Caco-2 (cell line): ENCODE measurements at regions of chr11 and their contacts with region 1.

Region 1: DNA sequence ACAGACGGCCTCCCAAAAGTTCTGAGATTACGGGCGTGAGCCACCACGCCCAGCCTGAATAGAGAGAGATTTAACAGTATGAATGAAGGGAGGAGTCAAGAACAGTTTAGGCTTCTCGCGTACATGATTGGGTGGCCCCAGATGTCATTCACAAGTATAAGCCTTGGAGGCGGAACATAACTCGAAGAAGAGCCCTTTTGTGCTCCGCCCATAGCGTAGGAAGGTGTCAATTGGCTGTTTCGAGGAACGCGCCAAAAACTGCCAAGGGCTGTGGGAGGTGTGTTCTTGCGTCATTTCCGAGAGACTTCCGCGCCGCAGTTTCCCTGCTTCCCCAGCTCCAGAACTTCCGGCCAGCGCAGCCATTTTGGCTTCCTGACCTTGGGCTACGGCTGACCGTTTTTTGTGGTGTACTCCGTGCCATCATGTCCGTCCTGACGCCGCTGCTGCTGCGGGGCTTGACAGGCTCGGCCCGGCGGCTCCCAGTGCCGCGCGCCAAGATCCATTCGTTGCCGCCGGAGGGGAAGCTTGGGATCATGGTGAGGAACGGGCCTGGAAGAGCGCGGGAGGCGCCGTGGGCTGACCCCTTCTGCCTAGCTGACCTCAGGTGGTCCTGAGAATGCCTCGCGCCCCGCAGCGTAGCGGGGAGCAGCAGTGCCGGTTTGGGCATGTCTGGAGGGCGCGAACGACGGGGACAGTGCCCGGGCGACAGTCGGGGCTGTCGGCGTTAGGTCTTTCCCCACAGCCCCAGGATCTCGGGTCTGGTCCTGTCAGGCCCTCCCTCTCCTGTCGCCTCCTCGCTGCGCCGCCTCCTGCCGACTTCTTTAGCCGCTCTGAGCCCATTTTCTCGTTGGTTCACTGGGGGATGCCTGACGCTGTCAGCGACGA is at the start of gene COX8A:
- DNase-seq: peak; percentile 98 to 99
- H3K4me3 ChIP-seq: peak within 1 kb of the TSS; percentile 74
- H3K4me3 Mint-ChIP-seq: peak within 1 kb of the TSS; percentile 99
- H3K27ac Mint-ChIP-seq: peak within 1 kb of the TSS; percentile 99
- H3K4me1 ChIP-seq: peaks cover 11% of the 10 kb centered on the region; the same call in 1 of the 2 replicates
- H3K4me1 Mint-ChIP-seq: peaks cover 17% of the 10 kb centered on the region
- H3K27me3 ChIP-seq: no peaks in the 10 kb centered on the region; the same call in 1 of the 2 replicates
- H3K27me3 Mint-ChIP-seq: no peaks in the 10 kb centered on the region
- CTCF ChIP-seq: peak in 1 of 2 experiments; percentile 22
- total RNA-seq, gene COX8A: 376 and 448 TPM in 2 replicates

Region 2: DNA sequence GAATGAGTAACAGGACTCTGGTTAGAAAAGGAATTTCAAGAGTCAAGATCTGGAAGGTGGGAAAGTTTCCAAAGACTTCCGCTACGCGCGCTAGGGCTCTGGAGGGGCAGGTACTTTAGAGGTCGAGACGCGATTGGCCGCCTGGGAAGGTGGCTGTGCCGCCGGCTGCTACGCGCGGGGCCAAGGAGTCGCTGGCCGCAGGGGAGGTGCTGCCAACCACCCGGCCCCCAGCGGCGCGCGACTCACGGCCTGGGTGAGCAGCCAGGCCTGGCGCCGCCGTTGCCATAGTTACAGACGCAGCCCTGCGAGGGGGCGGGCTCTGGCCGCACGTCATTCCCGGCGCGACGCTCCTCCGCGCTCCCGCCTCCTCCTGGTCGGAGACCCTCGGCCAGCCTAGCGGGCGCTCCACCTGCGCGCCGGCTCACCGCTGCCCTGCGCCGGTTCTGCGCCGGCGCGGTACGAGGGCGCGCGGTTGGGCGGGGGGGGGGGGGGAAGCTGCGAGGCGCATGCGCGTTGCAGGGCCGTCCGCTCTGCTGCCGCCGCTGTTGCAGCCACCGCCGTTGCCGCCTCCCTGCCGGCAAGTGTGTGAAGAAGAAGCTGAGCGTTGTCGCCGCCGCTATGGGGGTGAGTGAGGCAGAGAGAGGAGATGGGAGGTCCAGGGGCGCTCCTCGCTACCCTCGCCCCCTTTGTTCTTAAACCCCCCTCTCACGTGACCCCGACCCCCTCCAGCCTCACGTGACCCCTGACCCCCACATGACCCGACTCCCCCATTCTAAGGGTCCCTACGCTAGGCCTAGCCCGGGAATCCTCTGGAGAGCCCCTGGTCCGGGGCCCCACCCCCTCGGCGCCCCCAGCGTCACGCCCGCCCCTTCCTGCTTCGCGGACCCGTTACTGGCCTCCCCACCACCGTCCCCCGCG is 35.8 kb before region 1 on chr11 and contains the start of gene NAA40:
- CTCF ChIA-PET with region 1: no interaction called
- POLR2A ChIA-PET with region 1: interaction called, 3 read pairs
- intact Hi-C with region 1: loop called (anchors 2 kb)
- DNase-seq: peak; percentile 97 to 98
- H3K4me3 ChIP-seq: peak within 1 kb of the TSS; percentile 61
- H3K4me3 Mint-ChIP-seq: peak within 1 kb of the TSS; percentile 100
- H3K27ac Mint-ChIP-seq: peak within 1 kb of the TSS; percentile 98
- H3K4me1 ChIP-seq: no peaks in the 10 kb centered on the region
- H3K4me1 Mint-ChIP-seq: peaks cover 13% of the 10 kb centered on the region
- H3K27me3 ChIP-seq: no peaks in the 10 kb centered on the region
- H3K27me3 Mint-ChIP-seq: no peaks in the 10 kb centered on the region
- CTCF ChIP-seq: no peak
- total RNA-seq, gene NAA40: 42.7 and 43.7 TPM in 2 replicates

Region 3: GRCh38 chr11:63961608-63962412 is 12.7 kb before region 1 on chr11:
- CTCF ChIA-PET with region 1: interaction called, 12 read pairs
- POLR2A ChIA-PET with region 1: no interaction called
- intact Hi-C with region 1: no loop called
- DNase-seq: peak; percentile 64 to 65
- H3K4me3 ChIP-seq: no peak overlapping the region
- H3K4me3 Mint-ChIP-seq: no peak overlapping the region
- H3K27ac Mint-ChIP-seq: no peak overlapping the region
- H3K4me1 ChIP-seq: no peaks in the 10 kb centered on the region
- H3K4me1 Mint-ChIP-seq: no peaks in the 10 kb centered on the region
- H3K27me3 ChIP-seq: no peaks in the 10 kb centered on the region
- H3K27me3 Mint-ChIP-seq: no peaks in the 10 kb centered on the region
- CTCF ChIP-seq: no peak

Region 4: DNA sequence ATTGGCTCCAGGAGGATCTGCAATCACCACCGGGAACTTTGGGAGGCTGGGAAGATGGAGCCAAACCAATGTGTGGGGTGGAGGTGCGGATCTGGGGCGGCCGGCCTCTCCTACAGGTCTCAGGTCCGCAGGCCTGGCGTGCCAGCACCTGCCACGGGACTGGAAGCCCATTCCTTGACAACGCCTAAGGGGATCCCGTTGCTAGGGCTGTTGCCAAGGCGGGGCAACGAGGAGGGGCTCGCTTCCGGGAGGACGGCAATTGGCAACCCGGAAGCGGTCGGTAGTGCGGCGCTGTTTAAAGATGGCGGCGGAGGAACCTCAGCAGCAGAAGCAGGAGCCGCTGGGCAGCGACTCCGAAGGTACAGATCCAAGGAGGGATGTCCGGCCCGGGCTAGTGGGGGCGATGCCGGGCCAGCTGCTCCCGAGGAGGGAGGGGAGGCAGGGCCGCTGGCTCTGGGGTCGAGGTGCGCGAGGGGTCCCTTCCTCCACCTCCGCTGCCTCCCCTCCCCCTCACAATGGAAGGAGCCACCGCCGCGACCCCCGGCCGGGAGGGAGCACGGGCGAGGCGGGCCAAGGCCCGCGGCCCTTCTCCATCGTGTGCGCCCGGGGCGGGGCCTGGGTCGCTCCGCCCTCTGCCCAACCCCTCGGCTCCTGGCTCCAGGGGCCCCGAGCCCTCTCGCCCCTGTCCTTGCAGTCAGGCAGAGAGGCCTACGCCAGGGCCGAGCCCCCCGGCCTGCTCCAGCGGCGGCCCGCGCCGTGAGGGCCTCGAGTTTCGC is 11.8 kb after region 1 on chr11 and contains the start of gene OTUB1:
- CTCF ChIA-PET with region 1: no interaction called
- POLR2A ChIA-PET with region 1: no interaction called
- intact Hi-C with region 1: loop called (anchors 1 kb)
- DNase-seq: peak; percentile 98
- H3K4me3 ChIP-seq: peak within 1 kb of the TSS; percentile 96
- H3K4me3 Mint-ChIP-seq: peak within 1 kb of the TSS; percentile 98
- H3K27ac Mint-ChIP-seq: peak within 1 kb of the TSS; percentile 99
- H3K4me1 ChIP-seq: peaks cover 6% of the 10 kb centered on the region
- H3K4me1 Mint-ChIP-seq: peaks cover 17% of the 10 kb centered on the region
- H3K27me3 ChIP-seq: no peaks in the 10 kb centered on the region
- H3K27me3 Mint-ChIP-seq: no peaks in the 10 kb centered on the region
- CTCF ChIP-seq: no peak
- total RNA-seq, gene OTUB1: 140 and 152 TPM in 2 replicates